ENCODE measurements at regions of chr1 and their contacts with region 1.

Region 1: DNA sequence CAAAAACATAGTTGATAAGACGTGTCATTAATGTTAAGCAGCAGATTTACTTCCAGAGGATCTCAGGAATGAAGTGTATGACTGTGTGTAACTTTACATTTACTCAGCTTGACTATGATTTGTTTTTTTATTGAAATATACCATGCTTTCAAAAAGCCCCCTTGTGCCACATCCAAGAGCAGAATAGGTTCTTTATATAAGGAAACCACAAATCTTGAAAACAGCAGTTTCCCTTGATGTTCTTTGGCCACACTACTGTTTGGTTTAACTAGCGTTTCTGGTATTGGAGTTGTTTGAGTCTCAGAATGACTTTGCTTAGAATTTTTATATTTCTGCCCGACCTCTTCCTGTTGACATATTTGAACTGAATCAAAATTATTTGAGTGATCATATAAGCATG is 25.0 kb downstream of the LRRC8C start:
- DNase-seq: peak; percentile 74 to 86 (median 76)
- H3K4me3 ChIP-seq: no peak overlapping the region
- H3K4me3 Mint-ChIP-seq: peak overlapping the region; percentile 34 to 78 (median 70)
- H3K27ac ChIP-seq: peak overlapping the region; percentile 57
- H3K27ac Mint-ChIP-seq: peak overlapping the region; percentile 86 to 97 (median 92)
- H3K4me1 ChIP-seq: peaks cover 97% of the 10 kb centered on the region
- H3K4me1 Mint-ChIP-seq: peaks cover 71 to 96% (median 85%) of the 10 kb centered on the region in 4 donors
- H3K27me3 ChIP-seq: no peaks in the 10 kb centered on the region
- H3K27me3 Mint-ChIP-seq: no peaks in the 10 kb centered on the region

Region 2: DNA sequence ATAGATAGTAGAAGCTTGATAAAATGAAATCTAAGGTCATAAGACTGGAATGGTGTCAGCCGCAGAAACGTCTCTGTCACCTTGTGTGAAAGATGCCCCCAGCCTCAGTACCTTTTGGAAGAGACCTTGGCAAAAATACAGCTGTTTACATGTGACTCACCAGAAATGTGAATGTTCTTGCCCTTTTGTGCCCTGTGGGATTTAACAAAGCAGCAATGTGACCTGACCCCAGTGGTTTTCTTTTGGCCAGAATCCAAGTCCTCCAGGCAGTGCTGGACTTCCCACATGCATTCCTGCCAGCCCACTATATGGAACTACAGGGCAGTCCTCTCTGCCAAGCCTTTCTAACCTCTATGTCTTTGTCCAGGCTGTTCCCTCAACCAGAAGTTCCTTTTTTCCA is 52.2 kb before region 1 on chr1:
- CTCF ChIA-PET with region 1: no interaction called
- POLR2A ChIA-PET with region 1: interaction called, 102 read pairs
- intact Hi-C with region 1: loop called (anchors 1 kb)
- DNase-seq: no peak
- H3K4me3 ChIP-seq: peak overlapping the region in 1 of 2 donors; percentile 0
- H3K4me3 Mint-ChIP-seq: peak overlapping the region in 6 of 8 donors; percentile 29 to 97 (median 64)
- H3K27ac ChIP-seq: peak overlapping the region; percentile 84
- H3K27ac Mint-ChIP-seq: peak overlapping the region; percentile 98 to 100 (median 99)
- H3K4me1 ChIP-seq: peaks cover 95% of the 10 kb centered on the region
- H3K4me1 Mint-ChIP-seq: peaks cover 73 to 98% (median 87%) of the 10 kb centered on the region in 4 donors
- H3K27me3 ChIP-seq: no peaks in the 10 kb centered on the region
- H3K27me3 Mint-ChIP-seq: no peaks in the 10 kb centered on the region

Region 3: GRCh38 chr1:89670163-89670562 is 12.3 kb after region 1 on chr1:
- CTCF ChIA-PET with region 1: interaction called, 7 read pairs
- POLR2A ChIA-PET with region 1: interaction called, 41 read pairs
- intact Hi-C with region 1: loop called (anchors 1 kb)
- DNase-seq: peak; percentile 65 to 79 (median 70)
- H3K4me3 ChIP-seq: no peak overlapping the region
- H3K4me3 Mint-ChIP-seq: peak overlapping the region; percentile 4 to 82 (median 72)
- H3K27ac ChIP-seq: no peak overlapping the region
- H3K27ac Mint-ChIP-seq: peak overlapping the region; percentile 19 to 93 (median 84)
- H3K4me1 ChIP-seq: peaks cover 96% of the 10 kb centered on the region
- H3K4me1 Mint-ChIP-seq: peaks cover 79 to 97% (median 87%) of the 10 kb centered on the region in 4 donors
- H3K27me3 ChIP-seq: no peaks in the 10 kb centered on the region
- H3K27me3 Mint-ChIP-seq: no peaks in the 10 kb centered on the region

Region 4: DNA sequence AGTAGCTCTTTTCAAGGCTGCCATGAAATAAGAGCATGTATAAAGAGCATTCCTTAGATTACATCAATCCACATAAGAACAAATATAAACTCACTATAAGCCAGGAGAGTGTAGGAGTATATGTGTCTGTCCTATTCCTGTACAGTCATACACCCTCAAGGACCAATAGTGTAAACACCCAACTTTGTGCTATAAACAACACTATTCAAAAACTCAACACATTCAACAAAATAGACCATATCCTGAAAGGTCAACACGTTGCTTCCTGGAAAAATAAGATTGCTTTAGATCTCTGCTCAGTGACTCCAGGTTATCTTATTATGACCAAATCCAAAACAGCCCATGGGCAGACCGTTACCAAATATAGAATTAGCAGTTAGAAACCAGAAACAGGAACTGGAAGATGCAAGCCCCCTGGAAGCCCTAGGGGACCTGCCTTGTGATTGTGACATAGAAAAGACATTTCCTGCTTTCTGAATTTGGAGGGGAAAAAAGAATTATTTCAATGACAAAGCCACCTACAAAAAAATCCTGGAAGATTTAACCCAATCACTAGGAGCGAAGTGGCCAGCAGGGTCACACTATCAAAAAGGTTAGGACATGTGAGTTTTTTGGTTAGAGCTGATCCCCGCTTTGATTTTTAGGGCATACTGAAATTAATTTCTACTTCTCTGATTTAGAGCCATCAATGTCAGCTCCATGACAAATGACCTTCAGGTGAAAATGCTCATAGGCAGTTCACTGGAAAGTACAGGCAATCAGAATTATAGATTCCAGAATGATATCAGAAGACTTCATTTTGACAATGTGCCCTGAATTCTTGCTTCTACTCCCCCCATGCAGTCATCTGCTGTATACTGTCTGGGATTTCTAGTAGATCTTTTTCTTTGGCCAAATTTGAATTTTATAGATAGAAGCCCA is 35.0 kb after region 1 on chr1:
- CTCF ChIA-PET with region 1: interaction called, 3 read pairs
- POLR2A ChIA-PET with region 1: interaction called, 62 read pairs
- intact Hi-C with region 1: loop called (anchors 2 kb)
- DNase-seq: no peak
- H3K4me3 ChIP-seq: no peak overlapping the region
- H3K4me3 Mint-ChIP-seq: peak overlapping the region in 5 of 8 donors; percentile 20 to 57 (median 43)
- H3K27ac ChIP-seq: no peak overlapping the region
- H3K27ac Mint-ChIP-seq: peak overlapping the region; percentile 72 to 88 (median 75)
- H3K4me1 ChIP-seq: peaks cover 70% of the 10 kb centered on the region
- H3K4me1 Mint-ChIP-seq: peaks cover 67 to 93% (median 79%) of the 10 kb centered on the region in 4 donors
- H3K27me3 ChIP-seq: no peaks in the 10 kb centered on the region
- H3K27me3 Mint-ChIP-seq: no peaks in the 10 kb centered on the region

Region 5: DNA sequence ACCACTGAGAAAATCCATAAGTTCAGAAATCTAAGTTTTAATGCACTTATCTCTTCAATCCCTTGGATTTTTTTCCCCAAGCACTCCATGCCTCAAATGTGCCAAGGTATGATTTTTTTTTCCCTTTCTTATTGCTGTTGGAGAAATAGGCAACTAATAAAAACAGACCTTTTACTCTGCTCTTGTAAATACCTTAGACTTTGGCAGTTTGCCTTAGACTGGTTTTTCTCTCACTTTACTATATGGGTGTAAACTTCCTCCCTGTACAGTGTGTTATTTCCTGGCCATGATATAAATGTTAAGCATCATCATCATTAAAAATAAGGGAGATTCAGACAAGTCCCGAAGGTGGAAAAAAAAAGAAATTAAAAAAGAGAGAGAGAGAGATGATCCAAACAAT is 40.7 kb after region 1 on chr1:
- CTCF ChIA-PET with region 1: interaction called, 5 read pairs
- POLR2A ChIA-PET with region 1: interaction called, 62 read pairs
- intact Hi-C with region 1: loop called (anchors 2 kb)
- DNase-seq: peak in 2 of 5 donors; percentile 19 to 23
- H3K4me3 ChIP-seq: peak overlapping the region in 1 of 2 donors; percentile 0
- H3K4me3 Mint-ChIP-seq: peak overlapping the region; percentile 78 to 91 (median 86)
- H3K27ac ChIP-seq: peak overlapping the region; percentile 16
- H3K27ac Mint-ChIP-seq: peak overlapping the region; percentile 81 to 95 (median 92)
- H3K4me1 ChIP-seq: peaks cover 89% of the 10 kb centered on the region
- H3K4me1 Mint-ChIP-seq: peaks cover 68 to 91% (median 82%) of the 10 kb centered on the region in 4 donors
- H3K27me3 ChIP-seq: no peaks in the 10 kb centered on the region
- H3K27me3 Mint-ChIP-seq: no peaks in the 10 kb centered on the region